T-cell (primary cell): ENCODE measurements at regions of chrX and their contacts with region 1.

Region 1: DNA sequence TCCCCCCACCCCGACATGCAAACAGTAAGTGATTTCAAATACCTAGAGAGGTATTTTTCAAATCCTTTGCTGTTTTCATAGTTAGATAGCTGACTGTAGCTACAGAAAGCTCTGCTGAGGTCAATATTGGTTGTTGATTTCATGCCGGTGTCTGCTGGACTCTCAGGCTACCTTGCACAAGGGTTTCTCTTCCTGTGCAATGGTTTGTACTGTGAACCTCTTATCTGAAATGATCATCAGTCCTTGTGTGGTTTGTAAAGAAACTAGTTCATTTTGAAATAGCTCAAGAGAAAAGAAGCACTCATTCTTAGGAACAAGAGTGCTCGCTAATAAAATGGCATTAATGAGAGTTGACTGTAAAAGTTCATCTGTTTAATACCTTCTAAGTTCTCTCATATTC is 2.1 kb downstream of the MTM1 start:
- DNase-seq: peak in 1 of 35 experiments; percentile 36
- ATAC-seq: no peak
- H3K4me3 ChIP-seq: peak overlapping the region in 1 of 2 donors; percentile 17
- H3K4me3 Mint-ChIP-seq: peak overlapping the region; percentile 81 to 87 (median 82)
- H3K27ac ChIP-seq: peak overlapping the region; percentile 53
- H3K27ac Mint-ChIP-seq: peak overlapping the region; percentile 87 to 96
- H3K4me1 ChIP-seq: peaks cover 17 to 50% of the 10 kb centered on the region in 2 experiments
- H3K4me1 Mint-ChIP-seq: peaks cover 60 to 65% (median 63%) of the 10 kb centered on the region in 3 donors
- H3K27me3 ChIP-seq: no peaks in the 10 kb centered on the region
- H3K27me3 Mint-ChIP-seq: peaks cover 0 to 5% of the 10 kb centered on the region in 2 donors

Region 2: DNA sequence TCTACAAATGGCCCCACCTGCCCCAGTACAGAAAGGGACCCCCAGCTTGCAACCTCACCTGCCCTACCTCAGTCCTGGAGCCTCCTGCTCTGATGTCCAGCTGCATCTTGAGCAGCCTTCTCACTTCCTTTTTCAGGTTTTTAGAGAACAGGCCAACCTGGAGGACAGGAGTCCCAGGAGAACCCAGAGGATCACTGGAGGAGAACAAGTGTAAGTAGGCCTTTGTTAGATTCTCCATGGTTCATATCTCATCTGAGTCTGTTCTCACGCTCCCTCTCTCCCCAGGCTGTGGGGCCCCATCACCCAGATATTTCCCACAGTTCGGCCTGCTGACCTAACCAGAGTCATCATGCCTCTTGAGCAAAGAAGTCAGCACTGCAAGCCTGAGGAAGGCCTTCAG is 855.0 kb before region 1 on chrX:
- CTCF ChIA-PET with region 1: no interaction called
- POLR2A ChIA-PET with region 1: no interaction called
- DNase-seq: no peak
- ATAC-seq: no peak
- H3K4me3 ChIP-seq: no peak overlapping the region
- H3K4me3 Mint-ChIP-seq: no peak overlapping the region
- H3K27ac ChIP-seq: no peak overlapping the region
- H3K27ac Mint-ChIP-seq: no peak overlapping the region
- H3K4me1 ChIP-seq: no peaks in the 10 kb centered on the region
- H3K4me1 Mint-ChIP-seq: no peaks in the 10 kb centered on the region
- H3K27me3 ChIP-seq: no peaks in the 10 kb centered on the region
- H3K27me3 Mint-ChIP-seq: peaks cover 1 to 3% of the 10 kb centered on the region in 2 donors

Region 3: GRCh38 chrX:150421816-150422215 is 148.7 kb before region 1 on chrX:
- CTCF ChIA-PET with region 1: no interaction called
- POLR2A ChIA-PET with region 1: no interaction called
- DNase-seq: no peak
- ATAC-seq: no peak
- H3K4me3 ChIP-seq: no peak overlapping the region
- H3K4me3 Mint-ChIP-seq: no peak overlapping the region
- H3K27ac ChIP-seq: no peak overlapping the region
- H3K27ac Mint-ChIP-seq: no peak overlapping the region
- H3K4me1 ChIP-seq: no peaks in the 10 kb centered on the region
- H3K4me1 Mint-ChIP-seq: no peaks in the 10 kb centered on the region
- H3K27me3 ChIP-seq: peaks cover 0 to 2% of the 10 kb centered on the region in 2 experiments
- H3K27me3 Mint-ChIP-seq: peaks cover 0 to 25% of the 10 kb centered on the region in 2 donors

Region 4: DNA sequence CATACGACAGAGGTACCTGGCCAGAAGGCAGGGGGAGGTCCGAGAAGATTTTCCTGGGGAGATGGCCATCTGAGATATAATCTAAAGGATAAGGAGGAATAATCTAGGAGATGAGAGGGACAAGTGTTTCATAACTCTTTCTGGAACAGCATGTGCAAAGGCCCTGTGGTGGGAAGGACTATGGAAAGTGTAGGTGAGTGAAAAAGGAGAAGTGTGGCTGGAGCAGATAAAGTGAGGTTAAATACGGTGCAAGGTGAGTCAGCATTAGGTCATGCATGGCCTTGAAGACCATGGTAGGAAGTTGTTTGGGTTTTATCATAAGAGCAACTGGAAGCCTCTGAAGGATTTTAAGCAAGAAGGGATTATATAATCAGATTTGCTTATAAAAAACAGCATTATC is 36.6 kb before region 1 on chrX:
- CTCF ChIA-PET with region 1: no interaction called
- POLR2A ChIA-PET with region 1: no interaction called
- DNase-seq: no peak
- ATAC-seq: no peak
- H3K4me3 ChIP-seq: no peak overlapping the region
- H3K4me3 Mint-ChIP-seq: no peak overlapping the region
- H3K27ac ChIP-seq: no peak overlapping the region
- H3K27ac Mint-ChIP-seq: no peak overlapping the region
- H3K4me1 ChIP-seq: no peaks in the 10 kb centered on the region
- H3K4me1 Mint-ChIP-seq: no peaks in the 10 kb centered on the region
- H3K27me3 ChIP-seq: no peaks in the 10 kb centered on the region
- H3K27me3 Mint-ChIP-seq: peaks cover 0 to 4% of the 10 kb centered on the region in 2 donors

Region 5: GRCh38 chrX:150587585-150588503 is 17.3 kb after region 1 on chrX:
- CTCF ChIA-PET with region 1: interaction called, 4 to 13 read pairs
- POLR2A ChIA-PET with region 1: no interaction called
- DNase-seq: peak in 33 of 35 experiments; percentile 5 to 68 (median 36)
- ATAC-seq: peak in 1 of 4 experiments; percentile 52
- H3K4me3 ChIP-seq: no peak overlapping the region
- H3K4me3 Mint-ChIP-seq: no peak overlapping the region
- H3K27ac ChIP-seq: no peak overlapping the region
- H3K27ac Mint-ChIP-seq: no peak overlapping the region
- H3K4me1 ChIP-seq: no peaks in the 10 kb centered on the region
- H3K4me1 Mint-ChIP-seq: peaks cover 5 to 37% (median 19%) of the 10 kb centered on the region in 3 donors
- H3K27me3 ChIP-seq: no peaks in the 10 kb centered on the region
- H3K27me3 Mint-ChIP-seq: peaks cover 0 to 3% of the 10 kb centered on the region in 2 donors